ENCODE measurements at regions of chr16 and their contacts with region 1.

Region 1: GRCh38 chr16:15949210-15950160 is at the start of gene ABCC1:
- DNase-seq: peak; percentile 44
- H3K4me3 ChIP-seq: peak within 1 kb of the TSS; percentile 86
- H3K27ac ChIP-seq: peak within 1 kb of the TSS; percentile 62
- H3K4me1 ChIP-seq: peaks cover 7% of the 10 kb centered on the region
- H3K27me3 ChIP-seq: no peaks in the 10 kb centered on the region
- CTCF ChIP-seq: no peak
- total RNA-seq, gene ABCC1: 22.0 to 22.2 TPM

Region 2: DNA sequence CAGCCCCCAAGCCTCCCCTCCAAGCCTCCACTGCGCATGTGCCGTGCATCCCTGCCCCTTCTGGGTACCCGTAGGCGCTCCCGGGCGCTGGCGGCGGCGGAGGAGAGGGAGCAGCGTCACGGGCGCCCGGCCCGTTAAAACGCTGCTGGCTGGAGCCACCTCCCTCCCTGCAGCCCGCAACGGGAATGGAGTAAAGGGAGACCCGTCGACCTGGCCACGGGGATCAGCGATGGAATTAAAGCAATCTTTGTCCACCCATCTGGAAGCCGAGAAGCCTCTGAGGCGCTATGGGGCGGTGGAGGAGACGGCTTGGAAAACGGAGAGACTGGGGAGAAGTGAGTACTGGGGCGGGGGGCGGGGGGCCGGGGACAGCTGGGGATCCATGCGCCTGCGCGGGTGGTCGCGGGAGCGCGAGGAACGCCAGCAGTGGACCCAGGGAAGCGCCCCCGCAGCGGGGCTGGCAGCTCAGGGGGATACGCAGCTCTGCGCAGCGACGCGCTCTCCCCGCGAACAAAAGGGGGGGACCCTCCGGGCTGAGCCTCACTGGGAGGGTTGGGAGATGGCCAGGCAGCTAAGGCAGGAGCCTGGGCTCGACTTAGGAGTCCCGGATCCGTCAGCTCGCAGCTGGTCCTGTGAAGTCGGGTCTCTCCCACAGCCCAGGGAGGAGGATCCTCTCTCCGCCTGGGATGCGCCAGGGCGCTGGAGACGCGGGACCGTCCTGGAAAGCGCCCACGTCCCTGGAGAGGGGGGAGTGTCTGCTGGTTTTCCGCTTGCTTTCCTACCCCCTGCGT is 514.9 kb before region 1 on chr16 and contains the start of gene BMERB1:
- intact Hi-C with region 1: no loop called
- DNase-seq: peak; percentile 61
- H3K4me3 ChIP-seq: peak within 1 kb of the TSS; percentile 41
- H3K27ac ChIP-seq: peak within 1 kb of the TSS; percentile 49
- H3K4me1 ChIP-seq: no peaks in the 10 kb centered on the region
- H3K27me3 ChIP-seq: peaks cover 17% of the 10 kb centered on the region
- CTCF ChIP-seq: no peak
- total RNA-seq, gene BMERB1: 6.2 to 9.1 TPM

Region 3: DNA sequence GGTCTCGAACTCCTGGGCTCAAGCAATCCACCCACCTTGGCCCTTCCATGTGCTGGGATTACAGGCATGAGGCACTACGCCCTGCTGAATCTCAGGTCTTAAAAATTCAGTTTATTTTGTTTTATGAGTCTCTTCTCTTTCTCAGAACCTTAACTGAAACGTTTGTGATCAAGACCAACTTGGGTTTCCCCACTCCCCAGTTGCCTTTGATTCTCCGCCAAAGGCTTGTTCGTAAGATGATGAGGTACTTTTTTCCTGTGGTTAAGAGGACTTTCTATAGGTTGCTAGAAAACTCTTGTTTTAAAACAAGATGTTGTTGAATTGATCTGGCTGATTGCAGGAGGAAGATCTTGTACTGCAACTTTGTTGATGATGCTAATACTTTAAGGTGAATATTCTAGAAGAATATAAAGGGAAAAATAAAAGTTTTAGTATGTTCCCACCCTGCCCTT is 11.6 kb after region 1 on chr16:
- intact Hi-C with region 1: no loop called
- DNase-seq: no peak
- H3K4me3 ChIP-seq: no peak overlapping the region
- H3K27ac ChIP-seq: peak overlapping the region; percentile 37
- H3K4me1 ChIP-seq: no peaks in the 10 kb centered on the region
- H3K27me3 ChIP-seq: no peaks in the 10 kb centered on the region
- CTCF ChIP-seq: no peak

Region 4: GRCh38 chr16:16014329-16015144 is 65.1 kb after region 1 on chr16:
- intact Hi-C with region 1: loop called (anchors 10 kb)
- DNase-seq: no peak
- H3K4me3 ChIP-seq: no peak overlapping the region
- H3K27ac ChIP-seq: no peak overlapping the region
- H3K4me1 ChIP-seq: no peaks in the 10 kb centered on the region
- H3K27me3 ChIP-seq: no peaks in the 10 kb centered on the region
- CTCF ChIP-seq: no peak

Measured in colonic mucosa (tissue), 4 donors.